ENCODE measurements at regions of chr3 and their contacts with region 1.

Region 1: GRCh38 chr3:10437272-10437994 is 68.0 kb downstream of the ATP2B2 start:
- DNase-seq: no peak
- H3K4me3 ChIP-seq: no peak overlapping the region
- CTCF ChIP-seq: no peak
- POLR2A ChIP-seq: no peak

Region 2: GRCh38 chr3:10310578-10310977 is 126.9 kb before region 1 on chr3:
- intact Hi-C with region 1: no loop called
- DNase-seq: no peak
- H3K4me3 ChIP-seq: no peak overlapping the region
- CTCF ChIP-seq: no peak
- POLR2A ChIP-seq: no peak

Region 3: DNA sequence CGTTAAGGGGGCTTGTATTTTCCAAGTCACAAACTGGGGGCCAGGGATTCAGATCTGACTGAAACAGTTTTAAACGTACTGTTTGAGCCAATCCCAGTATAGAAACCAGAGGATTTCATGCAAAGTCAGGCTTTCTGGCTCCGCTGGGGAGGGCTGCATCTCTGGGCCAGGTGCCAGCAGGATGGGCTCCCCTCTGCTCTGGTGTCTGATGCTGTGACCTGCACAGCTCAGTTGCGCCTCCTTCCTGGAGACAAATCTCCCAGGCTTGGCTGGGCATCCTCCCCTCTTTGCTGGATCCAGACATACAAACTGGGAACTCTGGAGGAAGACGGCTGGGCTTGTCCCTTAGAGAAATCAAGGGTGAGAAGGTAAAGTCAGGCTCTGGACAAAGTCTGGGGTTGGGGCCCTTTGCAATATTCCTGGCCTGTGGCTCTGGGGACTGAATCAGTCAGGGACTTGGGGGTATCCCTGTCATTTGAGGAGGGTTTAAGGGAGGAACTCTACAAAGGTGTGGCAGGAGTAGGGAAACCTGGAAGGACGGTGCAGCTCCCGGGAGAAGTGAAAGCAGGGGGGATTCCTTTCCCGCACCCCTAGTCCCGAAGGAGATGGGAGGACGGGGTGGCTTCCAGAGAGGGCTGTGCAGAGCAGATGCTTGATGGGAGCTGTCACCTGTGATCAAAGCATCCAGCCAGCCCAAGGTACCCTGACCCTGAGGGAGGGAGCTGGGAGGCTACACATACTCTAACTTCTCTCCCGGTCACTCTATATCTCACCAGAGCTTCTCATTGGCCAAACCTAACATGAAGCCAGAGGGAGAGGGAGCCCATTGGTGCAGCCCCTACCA is 182.8 kb after region 1 on chr3:
- intact Hi-C with region 1: loop called (anchors 10 kb)
- DNase-seq: no peak
- H3K4me3 ChIP-seq: no peak overlapping the region
- CTCF ChIP-seq: no peak
- POLR2A ChIP-seq: no peak